ENCODE measurements at regions of chr5 and their contacts with region 1.

Region 1: GRCh38 chr5:103808464-103809106 is 246.0 kb upstream of the NUDT12 start:
- DNase-seq: peak; percentile 27
- H3K4me3 ChIP-seq: no peak overlapping the region
- H3K27ac ChIP-seq: no peak overlapping the region
- H3K27me3 ChIP-seq: no peaks in the 10 kb centered on the region
- CTCF ChIP-seq: peak; percentile 100

Region 2: DNA sequence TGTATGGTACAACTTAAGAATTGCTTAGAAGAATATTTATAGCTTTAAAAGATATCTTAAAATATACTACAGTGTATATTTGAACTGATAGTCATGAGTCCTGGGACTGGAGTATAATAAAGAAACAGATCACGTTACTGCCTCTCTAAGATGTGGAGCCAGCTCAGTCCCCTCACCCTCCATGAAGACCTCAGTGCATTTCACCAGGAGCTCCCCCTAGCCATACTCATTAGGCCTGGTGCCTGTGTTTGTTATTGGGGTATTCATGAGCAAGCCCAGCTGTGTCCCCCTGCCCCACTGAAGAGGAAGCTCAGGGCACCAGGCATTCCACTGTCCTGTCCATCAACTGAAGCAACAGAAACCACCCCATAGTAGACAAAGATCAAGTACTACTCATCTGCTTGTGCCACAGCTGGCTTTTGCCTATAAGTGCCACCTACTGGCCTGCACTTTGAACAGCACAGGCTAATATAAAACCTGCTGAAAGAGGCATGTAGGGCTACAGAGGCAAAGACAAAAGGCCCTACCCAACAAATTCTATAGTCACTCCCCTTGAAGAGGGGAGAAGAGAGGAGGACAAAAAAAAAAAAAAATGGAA is 604.2 kb after region 1 on chr5:
- CTCF ChIA-PET with region 1: interaction called, 25 read pairs
- POLR2A ChIA-PET with region 1: no interaction called
- DNase-seq: no peak
- H3K4me3 ChIP-seq: no peak overlapping the region
- H3K27ac ChIP-seq: no peak overlapping the region
- H3K27me3 ChIP-seq: no peaks in the 10 kb centered on the region
- CTCF ChIP-seq: peak; percentile 74

Measured in AG04450 (cell line).